CD14-positive monocyte (primary cell): ENCODE measurements at regions of chr2 and their contacts with region 1.

Region 1: DNA sequence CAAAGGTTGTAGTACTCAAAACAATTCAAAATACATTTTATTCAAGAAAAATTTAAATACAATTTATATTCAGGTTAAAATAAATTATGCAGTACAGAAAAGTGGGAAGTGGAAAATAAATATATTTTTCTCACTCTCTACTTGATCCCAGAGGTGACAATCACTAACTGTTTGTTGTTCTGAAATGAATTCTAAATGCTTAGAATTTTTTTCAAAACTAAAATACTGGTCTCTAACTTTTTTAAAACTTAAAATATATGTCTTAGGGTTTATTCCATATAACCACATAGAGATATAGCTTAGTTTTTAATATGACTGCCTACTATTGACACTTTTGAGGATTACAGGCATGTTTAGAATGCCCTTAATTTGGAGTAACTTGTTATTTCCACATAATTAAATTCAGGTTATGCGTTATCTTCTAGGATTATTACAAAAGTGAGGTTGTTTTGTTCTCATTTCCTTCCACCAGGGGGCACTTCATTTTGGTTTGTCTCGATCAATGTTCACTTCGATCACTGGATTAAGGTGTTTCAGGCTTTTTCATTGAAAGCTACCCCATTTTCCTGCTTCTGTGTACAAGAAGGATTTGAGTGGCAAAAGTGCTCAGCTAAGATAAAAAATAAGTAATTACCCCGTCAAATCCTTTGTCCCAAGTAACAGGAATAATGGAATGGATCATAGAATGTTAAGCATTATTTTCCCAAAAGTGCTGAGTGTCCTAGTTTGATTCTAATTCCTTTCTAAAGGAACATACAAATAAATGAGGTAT is 27.1 kb upstream of the TFPI start:
- DNase-seq: peak in 2 of 3 donors; percentile 12 to 16
- H3K4me3 ChIP-seq: peak overlapping the region in 1 of 3 experiments; percentile 34
- H3K4me3 Mint-ChIP-seq: no peak overlapping the region
- H3K27ac ChIP-seq: no peak overlapping the region
- H3K27ac Mint-ChIP-seq: no peak overlapping the region
- H3K4me1 ChIP-seq: peaks cover 6 to 11% of the 10 kb centered on the region in 2 donors
- H3K4me1 Mint-ChIP-seq: peaks cover 9% of the 10 kb centered on the region
- H3K27me3 ChIP-seq: no peaks in the 10 kb centered on the region
- H3K27me3 Mint-ChIP-seq: no peaks in the 10 kb centered on the region
- CTCF ChIP-seq: peak; percentile 79

Region 2: DNA sequence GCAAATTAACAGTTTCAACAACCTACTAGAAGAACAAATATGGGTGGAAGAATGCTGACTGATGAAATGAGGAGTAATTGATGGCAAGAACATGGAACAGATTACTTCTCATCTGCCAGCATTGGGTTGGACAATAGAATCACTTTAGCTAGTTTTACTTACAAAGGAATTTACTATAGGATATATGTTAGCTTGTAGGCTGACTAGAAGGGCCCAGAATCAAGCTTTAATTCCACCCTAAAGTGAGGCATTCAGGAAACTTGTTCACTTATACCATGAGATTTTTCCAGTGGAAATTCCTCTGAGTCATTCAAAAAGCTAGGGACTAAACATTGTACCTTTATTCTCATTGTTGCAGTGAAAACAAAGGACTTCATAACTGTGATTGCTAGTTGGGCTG is 727.4 kb before region 1 on chr2:
- intact Hi-C with region 1: loop called in 1 of 2 experiments (anchors 10 kb)
- DNase-seq: no peak
- H3K4me3 ChIP-seq: no peak overlapping the region
- H3K4me3 Mint-ChIP-seq: no peak overlapping the region
- H3K27ac ChIP-seq: no peak overlapping the region
- H3K27ac Mint-ChIP-seq: no peak overlapping the region
- H3K4me1 ChIP-seq: peaks cover 5 to 8% of the 10 kb centered on the region in 2 donors
- H3K4me1 Mint-ChIP-seq: peaks cover 14% of the 10 kb centered on the region
- H3K27me3 ChIP-seq: no peaks in the 10 kb centered on the region
- H3K27me3 Mint-ChIP-seq: no peaks in the 10 kb centered on the region
- CTCF ChIP-seq: no peak

Region 3: GRCh38 chr2:187263675-187264560 is 317.4 kb before region 1 on chr2:
- intact Hi-C with region 1: no loop called
- DNase-seq: no peak
- H3K4me3 ChIP-seq: no peak overlapping the region
- H3K4me3 Mint-ChIP-seq: no peak overlapping the region
- H3K27ac ChIP-seq: no peak overlapping the region
- H3K27ac Mint-ChIP-seq: no peak overlapping the region
- H3K4me1 ChIP-seq: no peaks in the 10 kb centered on the region
- H3K4me1 Mint-ChIP-seq: no peaks in the 10 kb centered on the region
- H3K27me3 ChIP-seq: no peaks in the 10 kb centered on the region
- H3K27me3 Mint-ChIP-seq: no peaks in the 10 kb centered on the region
- CTCF ChIP-seq: no peak

Region 4: GRCh38 chr2:187422282-187422681 is 159.0 kb before region 1 on chr2:
- intact Hi-C with region 1: no loop called
- DNase-seq: peak; percentile 13 to 55 (median 46)
- H3K4me3 ChIP-seq: peak overlapping the region in 1 of 3 experiments; percentile 46
- H3K4me3 Mint-ChIP-seq: no peak overlapping the region
- H3K27ac ChIP-seq: peak overlapping the region in 1 of 2 donors; percentile 63
- H3K27ac Mint-ChIP-seq: peak overlapping the region in 4 of 7 donors; percentile 10 to 47 (median 42)
- H3K4me1 ChIP-seq: peaks cover 18 to 31% of the 10 kb centered on the region in 2 donors
- H3K4me1 Mint-ChIP-seq: peaks cover 32% of the 10 kb centered on the region
- H3K27me3 ChIP-seq: no peaks in the 10 kb centered on the region
- H3K27me3 Mint-ChIP-seq: no peaks in the 10 kb centered on the region
- CTCF ChIP-seq: no peak

Region 5: DNA sequence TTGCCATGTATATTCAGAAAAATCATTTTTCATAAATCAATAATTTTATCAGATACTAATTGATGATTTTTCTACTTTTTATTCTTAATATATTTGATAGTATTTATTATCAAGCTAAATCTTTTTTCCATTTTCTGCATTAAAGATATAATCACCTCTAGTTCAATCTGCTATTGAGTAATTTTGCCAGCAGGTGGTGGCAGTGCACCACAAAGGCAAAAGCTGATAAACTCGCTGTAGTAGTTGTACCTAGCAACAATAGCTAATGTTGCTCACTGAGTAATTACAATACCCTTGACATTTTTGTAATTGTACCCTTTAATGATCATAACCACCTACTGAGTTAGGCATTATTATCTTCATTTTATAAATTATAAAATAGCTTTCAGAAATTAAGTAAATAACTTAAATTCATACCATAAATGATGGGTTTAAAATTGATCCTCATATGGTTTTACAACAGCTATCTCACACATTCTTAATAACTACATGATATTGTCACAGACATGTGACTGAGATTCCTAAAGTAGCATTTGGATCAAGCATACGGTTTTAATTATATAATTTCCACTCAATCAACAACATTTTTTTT is 81.3 kb before region 1 on chr2:
- intact Hi-C with region 1: loop called in 1 of 2 experiments (anchors 5 kb)
- DNase-seq: peak; percentile 0 to 29 (median 26)
- H3K4me3 ChIP-seq: no peak overlapping the region
- H3K4me3 Mint-ChIP-seq: no peak overlapping the region
- H3K27ac ChIP-seq: no peak overlapping the region
- H3K27ac Mint-ChIP-seq: no peak overlapping the region
- H3K4me1 ChIP-seq: no peaks in the 10 kb centered on the region
- H3K4me1 Mint-ChIP-seq: peaks cover 6% of the 10 kb centered on the region
- H3K27me3 ChIP-seq: no peaks in the 10 kb centered on the region
- H3K27me3 Mint-ChIP-seq: no peaks in the 10 kb centered on the region
- CTCF ChIP-seq: peak; percentile 85

Region 6: DNA sequence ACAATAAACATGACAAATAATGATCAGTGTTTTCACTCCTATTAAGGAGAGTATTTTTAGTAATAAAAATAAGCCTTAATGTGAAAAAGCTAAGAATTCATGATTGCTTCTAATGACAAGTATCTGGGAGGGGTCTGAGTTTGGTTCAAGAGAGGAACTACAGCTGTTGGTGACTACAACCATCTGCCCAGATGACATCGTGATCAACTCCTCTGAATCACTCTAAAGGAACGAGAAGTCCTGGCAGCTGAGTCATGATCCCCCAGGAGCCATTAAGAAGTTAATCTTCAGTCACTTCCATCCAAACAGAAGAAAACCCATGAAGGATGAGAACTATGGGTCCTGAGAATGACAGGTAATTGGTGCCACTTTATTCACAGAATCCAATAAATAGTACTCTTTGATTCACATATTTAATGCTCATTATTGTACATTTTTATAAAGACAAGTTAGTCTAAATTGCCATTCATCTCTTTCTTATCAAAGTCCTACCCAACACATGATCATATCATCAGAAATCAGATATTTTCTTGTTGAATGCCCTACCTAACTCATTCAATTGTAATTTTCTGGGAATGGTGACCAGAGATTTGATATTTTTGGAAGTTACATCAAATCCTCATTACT is 33.8 kb before region 1 on chr2:
- intact Hi-C with region 1: no loop called
- DNase-seq: peak; percentile 49 to 87 (median 62)
- H3K4me3 ChIP-seq: no peak overlapping the region
- H3K4me3 Mint-ChIP-seq: no peak overlapping the region
- H3K27ac ChIP-seq: no peak overlapping the region
- H3K27ac Mint-ChIP-seq: peak overlapping the region in 3 of 7 donors; percentile 21 to 75 (median 26)
- H3K4me1 ChIP-seq: no peaks in the 10 kb centered on the region
- H3K4me1 Mint-ChIP-seq: peaks cover 7% of the 10 kb centered on the region
- H3K27me3 ChIP-seq: no peaks in the 10 kb centered on the region
- H3K27me3 Mint-ChIP-seq: no peaks in the 10 kb centered on the region
- CTCF ChIP-seq: no peak

Region 7: DNA sequence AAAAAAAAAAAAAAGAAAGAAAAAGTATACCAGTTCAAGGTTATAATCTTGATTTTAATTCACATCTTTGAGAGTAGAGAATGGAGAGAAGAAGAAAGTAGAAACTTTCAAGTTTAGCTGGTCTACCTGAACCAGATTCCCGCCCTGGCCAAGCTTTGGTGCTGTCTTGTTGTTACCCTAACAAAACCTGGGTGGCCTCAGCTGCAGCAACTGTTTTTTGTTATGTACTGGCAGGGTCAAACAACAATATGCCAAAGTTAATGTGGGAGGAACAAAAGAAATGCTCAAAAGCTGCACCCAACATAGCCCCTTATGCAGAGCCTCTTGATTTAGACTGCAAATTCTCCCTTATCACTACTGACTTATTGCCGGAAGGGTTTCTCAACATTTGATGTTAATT is 138.2 kb after region 1 on chr2:
- intact Hi-C with region 1: no loop called
- DNase-seq: no peak
- H3K4me3 ChIP-seq: no peak overlapping the region
- H3K4me3 Mint-ChIP-seq: no peak overlapping the region
- H3K27ac ChIP-seq: no peak overlapping the region
- H3K27ac Mint-ChIP-seq: no peak overlapping the region
- H3K4me1 ChIP-seq: no peaks in the 10 kb centered on the region
- H3K4me1 Mint-ChIP-seq: no peaks in the 10 kb centered on the region
- H3K27me3 ChIP-seq: no peaks in the 10 kb centered on the region
- H3K27me3 Mint-ChIP-seq: no peaks in the 10 kb centered on the region
- CTCF ChIP-seq: no peak